Activated T-helper 1 cell treated with anti-CD3 and anti-CD28 coated beads, Interleukin-12 subunit alpha, Interleukin-12 subunit beta, Interleukin-2, Interleukin-4 antibody, amounts not matched to agents 30 ng/mL and 10 ng/mL and 1 ng/mL, durations not matched to agents 14 hours and 24 hours and 36 hours (primary cell): ENCODE measurements at regions of chr3 and their contacts with region 1.

Region 1: GRCh38 chr3:122484985-122485384 is 29.8 kb downstream of the KPNA1 start:
- DNase-seq: no peak
- H3K4me3 Mint-ChIP-seq: no peak overlapping the region
- H3K27ac Mint-ChIP-seq: no peak overlapping the region
- H3K4me1 Mint-ChIP-seq: peaks cover 48% of the 10 kb centered on the region
- H3K27me3 Mint-ChIP-seq: no peaks in the 10 kb centered on the region

Region 2: GRCh38 chr3:121431726-121432517 is 1053.1 kb before region 1 on chr3:
- intact Hi-C with region 1: loop called (anchors 10 kb)
- DNase-seq: peak; percentile 59
- H3K4me3 Mint-ChIP-seq: no peak overlapping the region
- H3K27ac Mint-ChIP-seq: peak overlapping the region; percentile 30
- H3K4me1 Mint-ChIP-seq: peaks cover 30% of the 10 kb centered on the region
- H3K27me3 Mint-ChIP-seq: no peaks in the 10 kb centered on the region

Region 3: GRCh38 chr3:122233101-122233952 is 251.7 kb before region 1 on chr3:
- intact Hi-C with region 1: no loop called
- DNase-seq: no peak
- H3K4me3 Mint-ChIP-seq: peak overlapping the region; percentile 3
- H3K27ac Mint-ChIP-seq: peak overlapping the region; percentile 7
- H3K4me1 Mint-ChIP-seq: peaks cover 18% of the 10 kb centered on the region
- H3K27me3 Mint-ChIP-seq: no peaks in the 10 kb centered on the region

Region 4: DNA sequence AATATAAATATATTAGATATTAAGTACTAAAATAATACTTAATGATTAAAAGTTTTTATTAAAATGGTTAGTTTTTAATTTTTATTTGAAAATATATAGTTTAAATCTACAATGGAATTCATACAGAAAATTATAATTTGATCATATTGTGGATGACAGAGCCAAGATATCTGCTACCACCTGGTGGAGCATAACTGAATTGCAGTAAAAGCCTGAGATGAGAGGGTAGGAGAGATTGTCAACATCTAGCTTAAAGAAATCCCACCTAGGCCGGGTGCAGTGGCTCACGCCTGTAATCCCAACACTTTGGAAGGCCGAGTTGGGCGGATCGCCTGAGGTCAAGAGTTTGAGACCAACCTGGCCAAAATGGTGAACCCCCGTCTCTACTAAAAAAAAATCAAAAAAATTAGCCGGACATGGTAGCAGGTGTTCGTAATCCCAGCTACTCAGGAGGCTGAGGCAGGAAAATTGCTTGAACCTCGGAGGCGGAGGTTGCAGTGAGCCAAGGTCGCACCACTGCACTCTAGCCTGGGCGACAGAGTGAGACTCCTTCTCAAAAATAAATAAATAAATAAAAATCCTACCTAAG is 185.0 kb before region 1 on chr3:
- intact Hi-C with region 1: loop called (anchors 5 kb)
- DNase-seq: no peak
- H3K4me3 Mint-ChIP-seq: no peak overlapping the region
- H3K27ac Mint-ChIP-seq: no peak overlapping the region
- H3K4me1 Mint-ChIP-seq: peaks cover 28% of the 10 kb centered on the region
- H3K27me3 Mint-ChIP-seq: no peaks in the 10 kb centered on the region

Region 5: DNA sequence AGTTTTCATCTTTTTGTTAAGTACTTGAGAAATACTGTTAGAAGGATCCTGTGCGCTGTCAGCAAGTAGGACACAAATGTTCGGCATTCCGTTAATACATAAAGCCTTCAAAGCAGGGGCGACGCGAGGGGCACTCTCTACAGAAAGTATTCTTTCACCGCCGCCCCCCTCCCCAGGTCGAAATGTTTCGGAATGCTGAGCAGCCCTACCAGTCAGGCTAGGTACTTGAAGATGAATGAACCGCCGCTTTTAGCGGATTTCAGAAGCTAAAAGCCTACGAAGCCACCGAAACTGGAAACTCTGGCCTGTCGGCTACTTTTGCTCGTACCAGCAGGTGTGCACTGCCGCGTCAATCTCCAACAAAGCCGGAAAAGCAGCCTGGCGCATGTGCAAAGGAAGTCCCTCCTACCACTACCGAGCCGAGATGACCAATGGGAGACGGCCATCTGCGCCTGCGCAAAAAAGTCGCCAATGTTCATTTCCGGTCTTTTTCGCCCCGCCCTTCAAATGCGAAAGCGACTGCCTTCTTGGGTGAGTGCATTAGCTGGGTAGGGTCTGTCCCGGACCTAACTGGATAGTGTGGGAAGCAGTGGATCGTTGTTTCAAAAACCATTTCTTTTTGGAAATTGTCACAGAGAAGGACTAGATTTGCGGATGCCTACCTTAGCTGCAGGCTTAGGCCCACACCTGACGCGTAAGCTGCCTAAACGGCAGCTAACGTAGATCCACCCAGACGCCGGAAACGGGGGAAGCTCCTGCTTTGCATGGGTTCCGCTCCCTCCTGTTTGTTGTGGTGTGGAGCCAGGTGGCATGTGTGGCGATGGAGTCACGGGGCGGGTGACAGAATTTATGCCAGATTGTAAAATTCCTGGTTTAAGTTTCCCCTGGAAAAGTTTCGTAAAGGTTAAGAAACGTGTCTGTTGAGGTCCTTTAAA is 69.0 kb before region 1 on chr3 and contains the start of gene WDR5B:
- intact Hi-C with region 1: loop called (anchors 1 kb)
- DNase-seq: peak; percentile 96
- H3K4me3 Mint-ChIP-seq: peak within 1 kb of the TSS; percentile 98
- H3K27ac Mint-ChIP-seq: peak within 1 kb of the TSS; percentile 99
- H3K4me1 Mint-ChIP-seq: peaks cover 48% of the 10 kb centered on the region
- H3K27me3 Mint-ChIP-seq: no peaks in the 10 kb centered on the region
- total RNA-seq, gene WDR5B: 4.3 and 5.6 TPM in 2 replicates

Region 6: DNA sequence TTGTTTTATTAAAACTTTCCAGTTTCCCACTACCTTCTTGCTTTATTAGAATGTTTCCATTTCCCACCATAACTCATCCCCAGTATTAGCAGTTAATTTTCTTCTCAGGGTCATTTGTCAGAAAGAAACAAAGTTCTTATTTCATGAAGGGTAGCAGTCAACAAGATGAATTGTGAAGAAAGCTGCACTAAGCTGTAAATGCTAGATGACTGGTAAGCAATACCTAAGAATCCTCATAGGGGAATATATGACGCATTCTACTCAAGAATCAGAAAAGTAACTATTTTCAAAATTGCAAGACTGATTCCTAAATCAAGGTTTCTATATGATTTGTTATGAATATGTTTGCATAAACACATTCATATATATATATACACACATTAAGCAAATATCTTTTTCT is 20.3 kb before region 1 on chr3:
- intact Hi-C with region 1: loop called (anchors 2 kb)
- DNase-seq: no peak
- H3K4me3 Mint-ChIP-seq: no peak overlapping the region
- H3K27ac Mint-ChIP-seq: peak overlapping the region; percentile 3
- H3K4me1 Mint-ChIP-seq: peaks cover 15% of the 10 kb centered on the region
- H3K27me3 Mint-ChIP-seq: no peaks in the 10 kb centered on the region

Region 7: DNA sequence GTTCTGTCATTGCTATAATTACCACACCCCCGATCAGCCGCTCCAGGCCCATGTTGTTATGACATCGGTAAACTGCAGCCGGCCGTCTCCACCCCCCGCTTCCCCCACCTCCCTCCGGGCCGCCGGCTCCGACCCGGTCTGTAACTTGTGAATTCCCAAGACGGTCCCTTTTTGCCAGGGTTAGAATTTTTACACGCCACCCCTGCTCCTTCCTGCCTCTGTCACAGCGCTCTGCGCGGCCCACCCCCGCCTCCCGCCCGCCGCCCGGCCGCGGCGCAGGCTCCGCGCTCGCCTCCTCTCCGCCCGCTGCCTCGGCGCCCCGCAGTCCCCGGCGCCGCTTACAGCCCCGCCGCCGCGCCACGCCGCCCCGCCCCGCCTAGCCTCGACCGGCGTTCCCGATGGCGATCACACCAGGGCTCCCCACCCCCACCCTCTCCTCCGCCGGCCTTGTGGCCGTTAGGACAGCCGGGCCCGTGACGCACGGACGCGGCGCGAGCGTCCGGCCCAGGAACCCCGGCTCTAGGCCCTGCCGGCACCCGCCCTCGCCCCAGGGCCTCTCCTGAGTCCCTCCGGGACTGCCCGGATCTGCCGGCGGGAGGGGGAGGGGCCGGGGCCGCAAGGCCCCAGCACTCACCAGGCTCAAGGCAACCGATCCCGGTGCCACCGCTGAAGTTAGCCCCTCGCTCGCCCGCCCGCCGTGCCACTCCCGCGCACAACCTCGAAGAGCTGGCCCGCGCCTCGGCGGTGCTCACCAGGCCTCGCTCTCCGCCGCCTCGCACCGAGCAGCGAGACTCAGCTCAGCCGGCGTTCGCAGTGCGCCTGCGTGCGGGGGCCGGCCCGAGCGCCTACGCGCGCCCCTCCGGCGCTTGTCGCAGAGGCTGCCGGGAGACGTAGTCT is 29.4 kb after region 1 on chr3 and contains the start of gene KPNA1:
- intact Hi-C with region 1: loop called (anchors 1 kb)
- DNase-seq: peak; percentile 85
- H3K4me3 Mint-ChIP-seq: peak within 1 kb of the TSS; percentile 90
- H3K27ac Mint-ChIP-seq: peak within 1 kb of the TSS; percentile 92
- H3K4me1 Mint-ChIP-seq: peaks cover 46% of the 10 kb centered on the region
- H3K27me3 Mint-ChIP-seq: peaks cover 4% of the 10 kb centered on the region
- total RNA-seq, gene KPNA1: 81.7 and 88.2 TPM in 2 replicates

Region 8: DNA sequence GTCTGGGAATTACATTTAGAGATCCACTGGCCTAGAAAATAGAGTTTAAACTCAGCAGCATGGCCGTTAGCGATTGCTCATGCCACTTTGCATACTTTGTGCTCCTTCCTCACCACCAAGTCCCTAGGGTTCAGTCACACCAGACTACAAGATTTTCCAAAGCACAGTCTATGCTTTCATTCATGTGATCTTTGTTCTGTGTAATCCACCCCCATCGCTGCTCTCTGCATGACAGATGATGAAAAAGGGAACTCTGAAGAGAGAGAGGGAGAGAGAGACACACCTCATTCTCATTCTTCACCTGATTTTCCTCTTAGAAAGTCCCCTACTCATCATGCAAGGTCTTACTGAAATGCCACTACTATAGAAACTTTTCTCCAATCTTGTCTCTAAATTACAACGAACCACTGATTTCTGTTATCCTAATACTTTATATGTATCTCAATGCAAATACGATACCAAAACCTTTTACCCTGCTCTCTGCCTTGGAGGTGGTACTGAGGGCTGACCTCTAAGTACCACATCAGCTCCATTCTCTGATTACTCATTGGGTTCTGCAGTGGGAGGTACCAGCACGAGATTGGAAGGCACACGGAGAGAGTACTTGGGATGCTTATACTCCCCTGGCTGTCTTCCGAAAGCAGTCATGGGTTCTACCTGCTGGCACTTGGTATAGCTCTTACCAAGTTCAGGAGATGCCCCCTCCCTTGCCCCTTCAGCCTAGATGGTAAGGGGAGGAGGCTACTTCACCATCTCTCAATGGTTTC is 91.4 kb after region 1 on chr3:
- intact Hi-C with region 1: loop called (anchors 1 kb)
- DNase-seq: no peak
- H3K4me3 Mint-ChIP-seq: peak overlapping the region; percentile 25
- H3K27ac Mint-ChIP-seq: peak overlapping the region; percentile 77
- H3K4me1 Mint-ChIP-seq: peaks cover 59% of the 10 kb centered on the region
- H3K27me3 Mint-ChIP-seq: no peaks in the 10 kb centered on the region